ENCODE measurements at regions of chr9 and their contacts with region 1.

Region 1: DNA sequence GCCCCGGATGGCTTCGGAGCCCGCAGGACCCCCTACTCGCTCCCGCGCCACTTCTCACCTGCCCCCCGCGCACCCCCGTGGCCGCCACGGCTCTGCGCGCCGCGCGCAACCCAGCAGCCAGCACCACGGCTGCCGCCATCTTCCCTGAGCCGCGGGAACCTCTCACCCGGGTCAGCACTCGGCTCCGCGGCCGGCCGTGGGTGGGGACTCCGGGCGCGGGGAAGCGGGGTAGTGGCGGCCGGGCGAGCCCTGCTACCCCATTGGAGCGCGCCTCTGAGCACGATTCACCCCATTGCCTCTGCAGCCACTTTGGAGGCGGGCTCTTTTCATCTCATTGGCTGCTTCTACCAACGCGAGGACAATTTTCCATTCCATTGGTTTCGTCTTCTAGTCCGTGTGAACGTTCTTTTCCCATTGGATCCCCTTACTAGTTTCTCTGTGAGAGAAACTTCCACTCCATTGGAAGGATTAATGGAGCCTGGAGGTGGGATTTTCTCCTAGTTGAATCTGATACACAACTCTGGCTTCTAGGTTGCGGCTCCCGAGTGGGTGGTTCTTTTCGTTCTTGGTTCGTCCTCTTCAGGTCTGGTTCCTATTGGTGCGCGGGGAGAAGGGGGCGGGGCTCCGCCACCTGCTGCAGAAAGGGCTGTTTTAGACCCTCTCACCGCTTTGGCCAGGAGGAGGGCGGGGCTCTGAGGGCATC is at the start of gene HINT2:
- DNase-seq: peak; percentile 99
- H3K4me3 ChIP-seq: peak within 1 kb of the TSS; percentile 75
- H3K27ac ChIP-seq: peak within 1 kb of the TSS; percentile 90
- H3K4me1 ChIP-seq: peaks cover 13% of the 10 kb centered on the region
- H3K27me3 ChIP-seq: no peaks in the 10 kb centered on the region
- CTCF ChIP-seq: no peak
- total RNA-seq, gene HINT2: 51.5 and 68.9 TPM in 2 replicates

Region 2: GRCh38 chr9:35603987-35604577 is 210.9 kb before region 1 on chr9:
- CTCF ChIA-PET with region 1: no interaction called
- POLR2A ChIA-PET with region 1: no interaction called
- intact Hi-C with region 1: loop called (anchors 10 kb)
- DNase-seq: peak; percentile 100
- H3K4me3 ChIP-seq: peak overlapping the region; percentile 79
- H3K27ac ChIP-seq: peak overlapping the region; percentile 79
- H3K4me1 ChIP-seq: no peaks in the 10 kb centered on the region
- H3K27me3 ChIP-seq: no peaks in the 10 kb centered on the region
- CTCF ChIP-seq: peak; percentile 99

Region 3: GRCh38 chr9:35657546-35658136 is 157.4 kb before region 1 on chr9 and contains the start of gene RMRP:
- CTCF ChIA-PET with region 1: no interaction called
- POLR2A ChIA-PET with region 1: no interaction called
- intact Hi-C with region 1: loop called (anchors 5 kb)
- DNase-seq: peak; percentile 100
- H3K4me3 ChIP-seq: peak within 1 kb of the TSS; percentile 74
- H3K27ac ChIP-seq: peak within 1 kb of the TSS; percentile 97
- H3K4me1 ChIP-seq: peaks cover 11% of the 10 kb centered on the region
- H3K27me3 ChIP-seq: no peaks in the 10 kb centered on the region
- CTCF ChIP-seq: peak; percentile 30; the same call in 1 of the 2 replicates
- total RNA-seq, gene RMRP: 13,531 and 14,573 TPM in 2 replicates

Region 4: GRCh38 chr9:35732122-35732799 is 82.7 kb before region 1 on chr9 and contains the starts of genes CREB3 and TLN1:
- CTCF ChIA-PET with region 1: no interaction called
- POLR2A ChIA-PET with region 1: no interaction called
- intact Hi-C with region 1: loop called (anchors 10 kb)
- DNase-seq: peak; percentile 99
- H3K4me3 ChIP-seq: peak within 1 kb of the TSS; percentile 90
- H3K27ac ChIP-seq: peak within 1 kb of the TSS; percentile 87
- H3K4me1 ChIP-seq: peaks cover 21% of the 10 kb centered on the region
- H3K27me3 ChIP-seq: no peaks in the 10 kb centered on the region
- CTCF ChIP-seq: peak; percentile 47
- total RNA-seq, gene CREB3: 27.6 and 29.1 TPM in 2 replicates
- total RNA-seq, gene TLN1: 173 and 178 TPM in 2 replicates

Region 5: DNA sequence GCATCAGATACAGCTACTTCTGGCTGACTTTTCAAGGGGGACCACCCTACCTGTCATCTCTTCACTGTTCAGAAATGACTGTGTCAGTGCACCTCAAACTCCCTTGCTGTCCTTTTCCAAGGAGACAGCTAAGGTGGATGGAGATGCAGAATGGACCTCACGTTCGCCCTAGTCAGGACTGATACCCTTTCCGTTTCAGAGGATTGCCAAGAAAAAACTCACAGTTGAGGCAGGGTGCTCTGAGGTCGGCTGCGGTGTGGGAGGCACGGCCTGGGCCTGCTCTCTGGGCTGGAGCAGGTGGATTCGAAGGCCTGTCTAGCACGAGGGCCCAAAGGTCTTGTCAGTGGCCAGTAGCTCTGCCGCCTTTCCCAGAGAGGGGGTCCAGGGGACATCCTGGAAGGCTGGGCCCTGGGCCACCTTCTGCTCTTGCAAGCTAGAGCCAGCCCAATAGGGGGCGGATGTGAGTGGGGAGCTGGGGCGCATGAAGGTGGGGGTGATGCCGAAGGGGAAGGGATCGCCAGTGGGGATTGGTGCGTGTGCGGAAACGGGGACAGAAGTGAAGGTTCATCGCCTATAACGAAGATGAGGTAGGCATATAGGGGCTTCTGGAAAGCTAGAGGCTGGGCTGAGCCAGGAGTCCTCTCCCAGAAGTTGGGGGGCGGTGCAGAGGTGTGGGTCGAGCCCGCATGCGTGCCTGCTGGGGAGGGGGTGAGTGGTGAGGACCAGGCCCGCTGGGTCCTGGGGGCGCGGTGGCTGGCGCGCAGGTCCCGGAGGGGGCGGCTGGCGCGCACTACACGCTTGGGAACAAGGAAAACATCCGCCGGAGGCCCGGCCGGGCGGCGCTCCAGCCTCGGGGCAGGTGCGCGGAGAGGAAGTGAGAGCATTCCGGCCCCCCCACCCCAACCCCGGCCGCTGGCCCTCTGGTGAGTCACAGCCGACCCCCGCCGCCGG is 58.4 kb before region 1 on chr9:
- CTCF ChIA-PET with region 1: no interaction called
- POLR2A ChIA-PET with region 1: interaction called, 8 read pairs
- intact Hi-C with region 1: loop called (anchors 5 kb)
- DNase-seq: peak; percentile 80
- H3K4me3 ChIP-seq: peak overlapping the region; percentile 87
- H3K27ac ChIP-seq: peak overlapping the region; percentile 91
- H3K4me1 ChIP-seq: peaks cover 13% of the 10 kb centered on the region
- H3K27me3 ChIP-seq: no peaks in the 10 kb centered on the region
- CTCF ChIP-seq: peak; percentile 82